A549 (cell line): ENCODE measurements at regions of chr12 and their contacts with region 1.

Region 1: GRCh38 chr12:3299929-3300832 is 190.8 kb upstream of the PRMT8 start:
- DNase-seq: peak; percentile 74 to 91
- ATAC-seq: peak; percentile 82 to 89
- H3K4me3 ChIP-seq: peak overlapping the region; percentile 20; the same call in 1 of the 3 replicates
- H3K27ac ChIP-seq: peak overlapping the region; percentile 41 to 76; a peak in 5 of 6 replicates
- H3K4me1 ChIP-seq: peaks cover 11% of the 10 kb centered on the region; the same call in 2 of the 3 replicates
- CTCF ChIP-seq: peak; percentile 74
- EP300 ChIP-seq: no peak
- POLR2A ChIP-seq: no peak
- RAD21 ChIP-seq: peak; percentile 76 to 86

Region 2: DNA sequence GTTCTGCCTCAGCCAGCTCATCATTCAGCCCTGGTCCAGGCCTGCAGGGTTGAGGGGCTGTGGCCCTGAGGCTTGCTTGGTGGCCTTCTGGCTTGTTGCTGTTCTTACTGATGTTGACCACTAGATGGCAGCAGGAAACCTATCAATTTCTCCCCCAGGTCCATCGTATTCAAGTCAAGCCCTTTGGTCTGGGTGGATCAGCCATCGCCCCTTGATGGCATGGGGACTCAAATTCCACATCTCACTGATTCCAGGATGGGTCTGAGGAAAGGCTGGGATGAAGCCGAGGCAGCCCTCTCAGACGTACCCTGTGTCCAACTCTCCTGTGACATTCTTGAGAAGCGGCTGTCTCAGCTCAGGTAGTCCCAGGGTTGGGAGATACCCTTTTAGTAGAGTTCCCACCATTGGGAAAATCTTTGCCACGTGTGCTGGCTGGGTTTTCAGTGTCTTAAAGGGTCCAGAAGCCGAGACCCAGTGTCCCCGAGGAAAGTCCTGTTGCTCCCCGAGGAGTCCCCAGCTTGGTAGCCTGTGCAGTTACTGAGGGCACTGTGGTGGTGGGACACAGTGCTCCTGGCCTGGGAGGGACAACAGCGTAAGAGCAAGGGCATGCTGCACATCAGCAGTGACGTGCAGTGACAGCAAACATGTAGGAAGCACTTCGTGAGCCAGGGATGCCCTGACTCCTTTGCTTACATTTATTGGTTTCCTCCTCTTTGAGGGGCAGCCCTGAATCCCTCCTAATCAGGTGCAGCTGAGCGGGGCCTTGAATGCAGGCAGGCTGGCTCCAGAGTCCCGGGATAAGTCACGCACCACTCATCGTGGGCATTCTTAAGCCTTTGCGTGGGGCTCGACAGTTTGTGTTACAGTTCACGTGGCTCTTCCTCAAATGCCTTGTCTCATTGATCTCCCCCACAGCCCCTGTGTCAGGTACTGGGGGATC is 164.4 kb before region 1 on chr12:
- CTCF ChIA-PET with region 1: interaction called, 24 read pairs
- POLR2A ChIA-PET with region 1: no interaction called
- DNase-seq: peak; percentile 83 to 89
- ATAC-seq: peak; percentile 84 to 92
- H3K4me3 ChIP-seq: no peak overlapping the region
- H3K27ac ChIP-seq: no peak overlapping the region; a peak in 1 of 6 replicates
- H3K4me1 ChIP-seq: peaks cover 11% of the 10 kb centered on the region; the same call in 1 of the 3 replicates
- CTCF ChIP-seq: peak; percentile 79
- EP300 ChIP-seq: no peak
- POLR2A ChIP-seq: no peak
- RAD21 ChIP-seq: peak; percentile 93

Region 3: DNA sequence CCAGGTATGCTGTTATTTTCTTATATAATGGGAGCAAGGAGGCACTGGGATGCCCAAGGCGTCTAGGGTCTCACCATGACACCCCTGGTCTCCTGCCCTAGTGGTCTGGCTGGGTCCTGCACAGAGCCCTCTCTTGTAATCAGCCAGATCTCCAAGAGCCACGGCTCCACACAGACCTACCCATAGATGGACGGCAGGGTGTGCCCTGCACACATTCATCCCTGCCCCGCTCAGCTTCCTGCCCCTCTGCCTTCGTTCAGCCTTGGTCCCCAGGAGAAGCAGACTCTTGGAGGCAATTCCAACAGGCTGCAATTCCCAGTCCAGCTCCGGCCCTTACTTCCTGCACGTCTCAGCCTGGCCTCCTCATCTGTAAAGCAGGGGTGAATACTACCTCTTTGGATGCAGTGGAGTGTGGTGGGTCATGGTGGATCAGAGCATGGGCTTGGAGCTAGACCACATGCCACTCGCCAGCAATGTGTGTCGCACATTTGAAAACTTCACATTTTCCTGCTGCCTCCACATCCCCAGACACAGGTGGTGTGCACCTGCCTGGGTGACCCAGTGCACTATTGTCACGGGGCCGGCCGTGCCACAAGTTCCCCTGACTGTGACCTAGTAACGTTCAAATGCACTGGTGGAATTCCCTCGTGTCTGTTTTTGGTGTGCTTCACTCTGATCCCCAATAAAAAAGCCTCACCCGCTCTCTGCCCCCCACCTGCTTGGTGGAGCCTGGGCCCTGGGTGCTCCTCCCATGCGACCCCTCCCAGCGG is 19.7 kb after region 1 on chr12:
- CTCF ChIA-PET with region 1: interaction called, 147 read pairs
- POLR2A ChIA-PET with region 1: no interaction called
- DNase-seq: peak; percentile 35 to 40
- ATAC-seq: peak; percentile 62 to 88
- H3K4me3 ChIP-seq: no peak overlapping the region
- H3K27ac ChIP-seq: no peak overlapping the region
- H3K4me1 ChIP-seq: no peaks in the 10 kb centered on the region
- CTCF ChIP-seq: no peak
- EP300 ChIP-seq: no peak
- POLR2A ChIP-seq: no peak
- RAD21 ChIP-seq: peak in 1 of 2 experiments; percentile 29; a peak in 3 of 5 replicates

Region 4: GRCh38 chr12:3350422-3350821 is 50.2 kb after region 1 on chr12:
- CTCF ChIA-PET with region 1: interaction called, 17 read pairs
- POLR2A ChIA-PET with region 1: no interaction called
- DNase-seq: no peak
- ATAC-seq: no peak
- H3K4me3 ChIP-seq: no peak overlapping the region
- H3K27ac ChIP-seq: no peak overlapping the region
- H3K4me1 ChIP-seq: no peaks in the 10 kb centered on the region
- CTCF ChIP-seq: no peak
- EP300 ChIP-seq: no peak
- POLR2A ChIP-seq: no peak
- RAD21 ChIP-seq: no peak

Region 5: GRCh38 chr12:3667485-3667884 is 367.3 kb after region 1 on chr12:
- CTCF ChIA-PET with region 1: interaction called, 12 read pairs
- POLR2A ChIA-PET with region 1: no interaction called
- DNase-seq: peak in 1 of 2 experiments; percentile 12
- ATAC-seq: no peak
- H3K4me3 ChIP-seq: no peak overlapping the region
- H3K27ac ChIP-seq: no peak overlapping the region
- H3K4me1 ChIP-seq: no peaks in the 10 kb centered on the region
- CTCF ChIP-seq: no peak
- EP300 ChIP-seq: no peak
- POLR2A ChIP-seq: no peak
- RAD21 ChIP-seq: no peak

Region 6: DNA sequence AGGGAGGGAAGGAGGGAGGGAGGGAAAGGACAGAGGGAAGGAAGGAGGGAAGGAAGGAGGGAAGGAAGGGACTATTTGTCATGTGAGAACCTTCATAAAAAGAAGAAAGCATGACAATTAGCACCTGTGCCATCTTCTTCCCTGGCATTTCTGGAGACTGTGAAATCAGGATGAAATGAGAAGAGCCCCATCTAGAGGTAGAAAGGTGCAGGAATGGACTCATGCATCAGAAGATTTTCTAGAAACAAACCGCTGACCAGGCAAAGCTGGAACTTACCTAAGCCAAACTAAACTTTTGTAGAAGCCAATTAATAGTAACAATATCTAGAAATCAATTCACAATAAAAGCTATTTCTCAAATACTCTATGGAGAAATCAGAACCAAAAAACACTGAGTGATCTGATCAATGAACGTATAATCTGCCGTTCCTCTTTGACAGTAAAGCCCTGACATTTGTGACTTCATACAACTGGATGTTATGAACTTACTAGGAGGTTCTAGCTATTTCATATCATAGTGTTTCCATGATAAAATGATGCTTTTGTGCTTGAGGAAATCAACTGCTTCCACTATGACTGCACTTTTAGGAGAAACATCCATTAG is 477.1 kb after region 1 on chr12:
- CTCF ChIA-PET with region 1: interaction called, 89 read pairs
- POLR2A ChIA-PET with region 1: interaction called, 3 read pairs
- DNase-seq: peak; percentile 25 to 46
- ATAC-seq: peak; percentile 74 to 86; a peak in 5 of 6 replicates
- H3K4me3 ChIP-seq: no peak overlapping the region
- H3K27ac ChIP-seq: no peak overlapping the region
- H3K4me1 ChIP-seq: no peaks in the 10 kb centered on the region
- CTCF ChIP-seq: peak; percentile 58
- EP300 ChIP-seq: no peak
- POLR2A ChIP-seq: no peak
- RAD21 ChIP-seq: peak; percentile 63 to 81

Region 7: GRCh38 chr12:3832738-3833137 is 532.6 kb after region 1 on chr12:
- CTCF ChIA-PET with region 1: interaction called, 10 read pairs
- POLR2A ChIA-PET with region 1: no interaction called
- DNase-seq: no peak
- ATAC-seq: no peak
- H3K4me3 ChIP-seq: no peak overlapping the region
- H3K27ac ChIP-seq: no peak overlapping the region
- H3K4me1 ChIP-seq: no peaks in the 10 kb centered on the region
- CTCF ChIP-seq: no peak
- EP300 ChIP-seq: no peak
- POLR2A ChIP-seq: no peak
- RAD21 ChIP-seq: no peak